ENCODE measurements at regions of chr19 and their contacts with region 1.

Region 1: GRCh38 chr19:15318241-15318691 is 14.1 kb downstream of the BRD4 start:
- DNase-seq: no peak
- H3K4me3 ChIP-seq: no peak overlapping the region
- H3K27ac ChIP-seq: no peak overlapping the region
- H3K4me1 ChIP-seq: peaks cover 3 to 17% (median 10%) of the 10 kb centered on the region in 4 experiments
- H3K27me3 ChIP-seq: no peaks in the 10 kb centered on the region
- CTCF ChIP-seq: no peak
- EP300 ChIP-seq: no peak
- POLR2A ChIP-seq: no peak
- RAD21 ChIP-seq: no peak

Region 2: GRCh38 chr19:15234043-15234873 is 84.0 kb before region 1 on chr19:
- CTCF ChIA-PET with region 1: no interaction called
- POLR2A ChIA-PET with region 1: no interaction called
- DNase-seq: no peak
- H3K4me3 ChIP-seq: no peak overlapping the region
- H3K27ac ChIP-seq: no peak overlapping the region
- H3K4me1 ChIP-seq: peaks cover 2 to 9% (median 5%) of the 10 kb centered on the region in 4 experiments; a peak in 6 of 7 replicates
- H3K27me3 ChIP-seq: no peaks in the 10 kb centered on the region
- CTCF ChIP-seq: no peak
- EP300 ChIP-seq: no peak
- POLR2A ChIP-seq: peak in 1 of 2 experiments; percentile 32; a peak in 1 of 3 replicates
- RAD21 ChIP-seq: no peak

Region 3: DNA sequence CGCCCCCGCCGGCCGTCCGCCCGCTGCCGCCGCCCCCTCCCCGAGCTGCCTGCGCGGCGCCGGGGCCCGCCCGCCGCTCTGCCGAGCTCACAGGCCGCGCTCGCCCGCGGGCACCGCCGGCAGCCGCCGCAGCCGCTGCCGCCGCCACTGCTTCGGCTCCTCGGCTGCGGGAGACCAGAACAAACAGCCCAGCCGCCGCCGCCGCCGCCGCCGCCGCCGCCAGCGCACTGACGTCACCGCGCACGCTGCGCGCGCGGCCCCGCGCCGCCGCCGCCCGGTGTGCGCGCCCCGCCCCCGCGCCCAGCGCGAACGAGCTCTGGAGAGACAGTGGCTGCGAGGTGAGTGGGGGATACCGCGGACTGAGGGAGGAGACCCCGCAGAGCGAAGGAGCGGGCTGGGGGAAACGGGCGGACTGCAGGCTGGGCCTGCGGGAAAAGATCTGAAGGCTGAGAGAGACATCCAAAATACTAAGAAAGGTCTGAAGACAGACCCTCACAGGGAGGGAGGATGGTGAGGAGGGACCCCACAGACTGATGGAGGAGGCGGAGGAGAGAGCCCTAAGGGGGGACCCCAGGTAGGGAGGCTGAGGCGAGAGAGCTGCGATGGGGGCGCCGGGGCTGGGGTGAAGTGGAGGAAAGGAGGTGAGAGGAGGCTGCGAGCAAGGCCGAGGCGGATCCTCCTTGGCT is 14.2 kb after region 1 on chr19 and contains the start of gene BRD4:
- CTCF ChIA-PET with region 1: no interaction called
- POLR2A ChIA-PET with region 1: interaction called, 27 read pairs
- DNase-seq: peak in 1 of 2 experiments; percentile 86
- H3K4me3 ChIP-seq: peak within 1 kb of the TSS; percentile 53 to 100 (median 90)
- H3K27ac ChIP-seq: peak within 1 kb of the TSS; percentile 94
- H3K4me1 ChIP-seq: peaks cover 0 to 2% (median 0%) of the 10 kb centered on the region in 4 experiments; a peak in 2 of 7 replicates
- H3K27me3 ChIP-seq: no peaks in the 10 kb centered on the region
- CTCF ChIP-seq: no peak
- EP300 ChIP-seq: no peak
- POLR2A ChIP-seq: no peak; a peak in 1 of 3 replicates
- RAD21 ChIP-seq: no peak
- total RNA-seq, gene BRD4: 144 and 146 TPM in 2 replicates

Measured in H1 (cell line).